Dorsolateral prefrontal cortex (tissue), 120 donors: ENCODE measurements at regions of chr13 and their contacts with region 1.

Region 1: DNA sequence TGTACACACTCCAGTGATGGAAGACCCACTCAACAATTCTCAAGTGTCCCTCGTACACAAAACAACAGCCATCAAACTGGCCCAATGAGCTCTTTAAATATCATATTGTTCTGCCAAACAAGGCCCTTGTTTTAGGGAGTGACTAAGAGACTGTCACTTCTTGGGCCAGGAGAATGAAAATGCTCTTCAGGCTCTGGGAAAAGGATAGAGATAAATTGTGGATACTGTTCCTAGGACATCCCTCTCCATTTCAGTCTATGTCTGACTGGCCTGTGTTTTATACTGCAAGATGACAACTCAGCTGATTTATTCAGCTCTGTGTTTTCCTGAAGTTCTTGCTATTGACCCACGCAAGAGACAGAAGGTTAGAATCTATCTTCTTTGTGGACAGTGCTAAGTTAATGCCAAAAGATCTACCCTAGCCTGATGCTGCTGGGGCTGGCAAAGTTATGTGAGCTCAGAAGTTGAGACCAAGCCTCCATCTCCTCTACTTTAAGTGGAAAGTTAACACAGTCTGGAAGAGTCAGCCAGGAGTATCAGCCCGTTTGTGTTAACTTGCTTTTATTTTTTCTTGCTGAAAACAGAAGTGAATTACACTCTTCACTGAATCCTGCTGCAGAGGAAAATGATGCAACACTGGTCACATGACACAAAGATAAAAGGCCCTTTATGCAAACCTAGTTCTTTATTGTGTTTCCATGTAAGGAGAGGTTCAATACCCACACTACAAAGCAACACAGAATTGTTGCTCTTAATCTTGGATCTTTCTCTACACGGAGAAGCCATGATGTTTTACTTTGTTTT is 14.6 kb downstream of the FRY start:
- DNase-seq: no peak
- H3K4me3 ChIP-seq: peak overlapping the region in 46 of 59 donors; percentile 1 to 58 (median 30)
- H3K27ac ChIP-seq: peak overlapping the region in 58 of 59 donors; percentile 34 to 95 (median 84)
- H3K27me3 ChIP-seq: peaks cover 0 to 3% (median 0%) of the 10 kb centered on the region in 45 donors
- CTCF ChIP-seq: no peak

Region 2: DNA sequence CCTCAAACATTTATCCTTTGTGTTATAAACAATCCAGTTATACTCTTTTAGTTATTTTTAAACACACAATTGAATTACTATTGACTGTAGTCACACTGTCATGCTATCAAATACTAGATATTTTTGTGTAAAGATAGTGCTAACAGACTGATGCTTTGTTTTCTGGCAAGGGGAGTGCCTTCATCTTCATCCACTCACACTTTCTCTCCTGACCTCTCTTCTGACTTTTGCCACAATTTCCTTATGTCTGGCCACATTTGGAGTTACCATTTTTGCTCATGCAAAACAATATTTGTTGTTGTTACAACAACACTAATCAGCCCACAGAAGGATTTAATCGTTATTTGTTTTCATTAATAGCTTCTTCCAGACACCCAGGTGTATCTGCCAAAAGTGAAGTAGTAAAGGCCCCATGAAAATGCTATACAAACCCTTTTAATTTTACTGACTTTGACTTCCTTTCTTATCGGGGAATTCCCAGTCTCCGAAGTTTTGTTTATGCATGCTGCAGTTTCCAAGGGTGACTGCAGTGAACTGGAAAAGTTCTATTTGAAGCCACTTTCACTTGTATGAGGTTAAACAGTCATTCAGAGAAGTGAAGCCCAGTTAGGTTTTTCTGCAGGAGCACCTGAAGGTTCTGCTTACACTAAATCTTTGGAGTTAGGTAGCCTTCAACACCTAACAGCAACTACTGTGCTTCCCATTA is 80.7 kb before region 1 on chr13:
- intact Hi-C with region 1: no loop called
- DNase-seq: no peak
- H3K4me3 ChIP-seq: no peak overlapping the region
- H3K27ac ChIP-seq: no peak overlapping the region
- H3K27me3 ChIP-seq: no peaks in the 10 kb centered on the region
- CTCF ChIP-seq: no peak

Region 3: GRCh38 chr13:32164622-32165268 is 118.6 kb after region 1 on chr13:
- intact Hi-C with region 1: loop called in 1 of 2 experiments (anchors 10 kb)
- DNase-seq: peak in 2 of 10 donors; percentile 19 to 22
- H3K4me3 ChIP-seq: no peak overlapping the region
- H3K27ac ChIP-seq: peak overlapping the region in 33 of 59 donors; percentile 0 to 87 (median 35)
- H3K27me3 ChIP-seq: no peaks in the 10 kb centered on the region
- CTCF ChIP-seq: peak in 54 of 56 donors; percentile 21 to 70 (median 56)